AG04449 (cell line): ENCODE measurements at regions of chr1 and their contacts with region 1.

Region 1: DNA sequence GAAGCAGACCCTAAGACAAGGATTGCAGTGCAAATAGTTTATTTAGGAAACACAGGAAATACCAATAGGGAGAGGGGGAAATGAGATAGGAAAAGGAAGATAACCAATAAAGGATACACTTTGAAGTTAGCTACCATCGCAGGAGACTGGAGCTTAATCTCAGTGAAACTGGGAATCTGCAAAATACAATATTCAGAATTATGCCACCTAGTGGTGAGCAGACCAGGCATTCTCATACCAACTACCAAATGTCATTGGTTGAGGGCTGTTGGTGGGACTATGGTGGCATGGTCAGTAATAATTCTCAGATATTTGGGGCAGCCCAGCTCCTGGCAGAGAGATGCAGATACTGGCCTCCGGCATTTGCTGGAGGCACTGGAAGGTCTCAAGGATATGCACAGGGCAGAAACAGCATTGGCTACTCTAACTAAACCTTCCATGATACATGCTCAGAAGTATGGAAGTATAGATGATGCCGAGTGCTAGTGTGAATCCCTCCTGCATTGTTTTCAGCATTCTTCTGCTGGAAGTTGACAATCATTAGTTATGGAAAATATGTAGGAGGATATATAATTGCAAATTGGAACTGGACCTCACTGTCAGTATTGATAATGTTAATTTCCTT is 11.8 kb upstream of the ZFP69B start:
- DNase-seq: no peak
- H3K4me3 ChIP-seq: no peak overlapping the region
- CTCF ChIP-seq: peak; percentile 45

Region 2: DNA sequence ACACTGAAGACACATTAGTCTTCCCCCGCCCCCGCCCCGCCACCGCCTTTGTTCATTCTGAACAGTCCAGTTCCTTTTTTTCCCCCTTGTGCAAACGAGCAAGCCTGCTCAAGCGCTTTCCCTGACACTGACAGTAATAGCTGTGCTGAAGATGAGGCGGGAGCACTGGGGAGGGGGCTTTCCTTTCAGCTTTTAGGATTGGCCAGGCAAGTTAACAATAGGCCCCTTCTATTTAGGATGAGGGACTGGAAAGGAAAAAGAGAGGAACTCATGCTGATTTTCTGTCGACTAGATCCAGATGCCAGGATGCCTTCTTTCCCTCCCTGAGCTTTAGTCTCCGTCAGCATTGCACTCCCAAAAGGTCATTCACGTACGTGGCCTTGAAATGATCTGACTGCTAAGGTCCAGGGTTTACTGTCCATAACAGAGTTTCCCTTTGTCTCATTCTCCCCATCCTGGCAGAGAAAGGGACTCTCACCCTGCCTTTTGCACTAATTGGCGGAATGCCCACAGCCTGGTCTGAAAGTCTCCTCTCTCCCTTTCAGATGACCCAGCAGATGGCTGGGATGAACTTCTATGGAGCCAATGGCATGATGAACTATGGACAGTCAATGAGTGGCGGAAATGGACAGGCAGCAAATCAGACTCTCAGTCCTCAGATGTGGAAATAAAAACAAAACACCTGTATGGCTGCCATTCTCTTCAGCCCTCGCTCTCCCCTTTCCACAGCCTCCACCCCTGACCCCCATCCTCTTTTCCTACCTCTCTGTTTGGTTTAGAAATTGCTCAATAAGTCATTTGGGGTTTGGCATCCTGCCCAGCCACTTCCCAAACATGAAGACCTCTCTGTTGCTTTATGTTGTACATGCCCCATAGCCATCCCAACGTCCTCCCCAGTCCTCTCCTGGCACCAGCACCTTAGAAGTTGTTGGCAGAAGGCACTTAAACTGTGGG is 16.8 kb before region 1 on chr1:
- CTCF ChIA-PET with region 1: interaction called, 14 read pairs
- POLR2A ChIA-PET with region 1: interaction called, 3 read pairs
- DNase-seq: no peak
- H3K4me3 ChIP-seq: no peak overlapping the region
- CTCF ChIP-seq: no peak

Region 3: GRCh38 chr1:40449684-40450494 is 11.4 kb after region 1 on chr1 and contains the start of gene ZFP69B:
- CTCF ChIA-PET with region 1: interaction called, 25 read pairs
- POLR2A ChIA-PET with region 1: no interaction called
- DNase-seq: peak; percentile 16
- H3K4me3 ChIP-seq: peak within 1 kb of the TSS; percentile 78
- CTCF ChIP-seq: peak; percentile 28

Region 4: GRCh38 chr1:41213341-41213740 is 774.8 kb after region 1 on chr1:
- CTCF ChIA-PET with region 1: no interaction called
- POLR2A ChIA-PET with region 1: no interaction called
- DNase-seq: no peak
- H3K4me3 ChIP-seq: no peak overlapping the region
- CTCF ChIP-seq: no peak